Natural killer cell (primary cell): ENCODE measurements at regions of chr3 and their contacts with region 1.

Region 1: GRCh38 chr3:16993227-16993626 is 108.5 kb downstream of the PLCL2 start:
- DNase-seq: no peak
- ATAC-seq: no peak
- H3K4me3 ChIP-seq: no peak overlapping the region
- H3K4me3 Mint-ChIP-seq: no peak overlapping the region
- H3K27ac ChIP-seq: no peak overlapping the region
- H3K27ac Mint-ChIP-seq: peak overlapping the region; percentile 73 to 77
- H3K4me1 ChIP-seq: peaks cover 48% of the 10 kb centered on the region
- H3K4me1 Mint-ChIP-seq: peaks cover 88 to 95% of the 10 kb centered on the region in 2 donors
- H3K27me3 ChIP-seq: no peaks in the 10 kb centered on the region
- H3K27me3 Mint-ChIP-seq: no peaks in the 10 kb centered on the region
- CTCF ChIP-seq: no peak

Region 2: GRCh38 chr3:16467393-16467792 is 525.8 kb before region 1 on chr3:
- intact Hi-C with region 1: no loop called
- DNase-seq: peak; percentile 32 to 81
- ATAC-seq: peak; percentile 70 to 86 (median 75)
- H3K4me3 ChIP-seq: no peak overlapping the region
- H3K4me3 Mint-ChIP-seq: peak overlapping the region; percentile 11
- H3K27ac ChIP-seq: no peak overlapping the region
- H3K27ac Mint-ChIP-seq: peak overlapping the region; percentile 62 to 80
- H3K4me1 ChIP-seq: peaks cover 27% of the 10 kb centered on the region
- H3K4me1 Mint-ChIP-seq: peaks cover 67 to 71% of the 10 kb centered on the region in 2 donors
- H3K27me3 ChIP-seq: no peaks in the 10 kb centered on the region
- H3K27me3 Mint-ChIP-seq: no peaks in the 10 kb centered on the region
- CTCF ChIP-seq: no peak

Region 3: DNA sequence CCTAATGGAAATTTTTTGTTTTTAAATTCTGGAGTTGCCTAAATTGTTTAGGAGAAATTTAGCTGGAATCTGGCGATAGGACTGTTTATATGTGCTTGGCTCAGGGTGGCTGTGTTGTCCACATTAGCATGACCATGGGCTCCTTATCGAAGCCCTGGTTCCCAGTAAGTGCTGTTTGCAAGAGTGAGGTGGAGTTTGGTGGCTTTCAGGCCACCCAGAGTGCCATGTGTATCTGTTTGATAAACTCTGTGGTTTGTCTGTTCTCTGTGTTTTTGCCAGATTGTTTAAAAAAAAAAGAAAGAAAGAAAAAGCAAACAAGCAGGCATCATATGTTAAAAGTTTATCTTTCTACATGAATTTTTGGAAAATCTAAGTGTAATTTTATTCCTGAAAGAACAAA is 57.0 kb before region 1 on chr3:
- intact Hi-C with region 1: loop called (anchors 5 kb)
- DNase-seq: peak in 1 of 2 donors; percentile 59
- ATAC-seq: peak; percentile 46 to 72 (median 60)
- H3K4me3 ChIP-seq: no peak overlapping the region
- H3K4me3 Mint-ChIP-seq: peak overlapping the region; percentile 85
- H3K27ac ChIP-seq: no peak overlapping the region
- H3K27ac Mint-ChIP-seq: peak overlapping the region; percentile 63 to 80
- H3K4me1 ChIP-seq: peaks cover 39% of the 10 kb centered on the region
- H3K4me1 Mint-ChIP-seq: peaks cover 88 to 96% of the 10 kb centered on the region in 2 donors
- H3K27me3 ChIP-seq: no peaks in the 10 kb centered on the region
- H3K27me3 Mint-ChIP-seq: no peaks in the 10 kb centered on the region
- CTCF ChIP-seq: no peak

Region 4: DNA sequence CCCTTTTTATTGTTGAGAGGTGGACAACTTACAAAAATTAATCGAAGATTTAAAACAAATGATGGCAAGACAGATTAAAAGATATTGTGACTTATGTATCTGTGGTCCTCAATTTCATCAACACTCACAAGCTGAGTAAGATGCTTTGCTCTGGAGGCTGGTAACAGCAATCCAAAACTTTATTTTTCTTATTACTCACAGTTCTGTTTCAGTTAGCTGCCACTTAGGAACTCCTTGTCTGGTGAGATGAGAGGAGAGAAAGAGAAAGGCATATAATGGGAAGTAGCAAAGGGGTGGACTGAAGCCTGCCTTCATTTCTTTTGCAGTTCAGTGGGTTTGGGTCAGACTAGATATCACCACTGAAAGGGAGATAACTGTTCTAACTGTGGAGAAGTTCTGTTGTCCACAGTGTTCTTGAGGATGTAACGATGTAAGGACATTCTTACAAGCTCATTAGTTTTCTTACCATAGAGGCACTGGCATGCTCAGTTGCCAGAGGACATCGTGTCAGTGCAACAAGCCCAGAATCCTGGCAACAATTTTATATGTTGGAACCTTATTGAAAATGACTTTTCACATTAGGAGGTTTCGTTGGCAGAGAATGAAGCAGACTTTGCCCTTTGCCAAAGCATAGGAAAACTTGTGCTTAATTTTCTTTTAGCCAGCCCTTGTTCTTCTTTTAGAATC is 14.8 kb before region 1 on chr3:
- intact Hi-C with region 1: no loop called
- DNase-seq: no peak
- ATAC-seq: no peak
- H3K4me3 ChIP-seq: no peak overlapping the region
- H3K4me3 Mint-ChIP-seq: no peak overlapping the region
- H3K27ac ChIP-seq: no peak overlapping the region
- H3K27ac Mint-ChIP-seq: peak overlapping the region; percentile 37
- H3K4me1 ChIP-seq: peaks cover 18% of the 10 kb centered on the region
- H3K4me1 Mint-ChIP-seq: peaks cover 69 to 75% of the 10 kb centered on the region in 2 donors
- H3K27me3 ChIP-seq: no peaks in the 10 kb centered on the region
- H3K27me3 Mint-ChIP-seq: no peaks in the 10 kb centered on the region
- CTCF ChIP-seq: no peak